CD4-positive, alpha-beta T cell (primary cell): ENCODE measurements at regions of chr11 and their contacts with region 1.

Region 1: GRCh38 chr11:34174412-34175041 is 69.1 kb downstream of the NAT10 start:
- DNase-seq: peak; percentile 65 to 88 (median 74)
- ATAC-seq: peak; percentile 99
- H3K4me3 ChIP-seq: peak overlapping the region; percentile 28
- H3K4me3 Mint-ChIP-seq: no peak overlapping the region
- H3K27ac ChIP-seq: no peak overlapping the region
- H3K27ac Mint-ChIP-seq: no peak overlapping the region
- H3K4me1 ChIP-seq: peaks cover 12% of the 10 kb centered on the region
- H3K4me1 Mint-ChIP-seq: no peaks in the 10 kb centered on the region
- H3K27me3 ChIP-seq: peaks cover 0 to 2% of the 10 kb centered on the region in 2 experiments
- H3K27me3 Mint-ChIP-seq: no peaks in the 10 kb centered on the region
- CTCF ChIP-seq: peak; percentile 79

Region 2: GRCh38 chr11:33857933-33858371 is 316.6 kb before region 1 on chr11:
- CTCF ChIA-PET with region 1: no interaction called
- POLR2A ChIA-PET with region 1: no interaction called
- intact Hi-C with region 1: loop called in 1 of 2 experiments (anchors 5 kb)
- DNase-seq: peak; percentile 54 to 84 (median 64)
- ATAC-seq: peak; percentile 89
- H3K4me3 ChIP-seq: no peak overlapping the region
- H3K4me3 Mint-ChIP-seq: no peak overlapping the region
- H3K27ac ChIP-seq: no peak overlapping the region
- H3K27ac Mint-ChIP-seq: no peak overlapping the region
- H3K4me1 ChIP-seq: no peaks in the 10 kb centered on the region
- H3K4me1 Mint-ChIP-seq: no peaks in the 10 kb centered on the region
- H3K27me3 ChIP-seq: peaks cover 21 to 30% of the 10 kb centered on the region in 2 experiments
- H3K27me3 Mint-ChIP-seq: peaks cover 56% of the 10 kb centered on the region
- CTCF ChIP-seq: peak; percentile 74

Region 3: DNA sequence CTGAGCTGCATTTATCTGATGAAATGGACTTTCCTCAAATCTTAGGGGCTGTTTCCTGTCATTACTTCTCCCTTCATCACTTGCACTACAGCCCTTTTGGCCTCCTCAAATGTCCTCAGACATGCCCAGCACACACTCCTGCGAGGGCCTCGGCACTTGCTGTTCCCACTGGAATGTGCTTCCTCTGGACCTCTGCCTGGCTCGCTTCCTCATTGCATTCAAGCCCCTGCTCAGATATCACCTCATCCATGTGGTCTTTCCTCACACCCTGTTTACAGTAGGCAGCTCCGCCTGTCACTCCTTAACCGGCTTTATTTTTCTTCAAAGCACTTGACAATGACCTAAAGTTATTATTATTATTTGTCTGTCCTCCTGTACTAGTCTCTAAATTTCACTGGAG is 60.1 kb before region 1 on chr11:
- CTCF ChIA-PET with region 1: interaction called, 5 read pairs
- POLR2A ChIA-PET with region 1: no interaction called
- intact Hi-C with region 1: loop called in 1 of 2 experiments (anchors 5 kb)
- DNase-seq: no peak
- ATAC-seq: no peak
- H3K4me3 ChIP-seq: no peak overlapping the region
- H3K4me3 Mint-ChIP-seq: no peak overlapping the region
- H3K27ac ChIP-seq: no peak overlapping the region
- H3K27ac Mint-ChIP-seq: no peak overlapping the region
- H3K4me1 ChIP-seq: no peaks in the 10 kb centered on the region
- H3K4me1 Mint-ChIP-seq: peaks cover 7% of the 10 kb centered on the region
- H3K27me3 ChIP-seq: no peaks in the 10 kb centered on the region
- H3K27me3 Mint-ChIP-seq: no peaks in the 10 kb centered on the region
- CTCF ChIP-seq: no peak

Region 4: GRCh38 chr11:34250732-34251639 is 76.5 kb after region 1 on chr11:
- CTCF ChIA-PET with region 1: interaction called, 17 read pairs
- POLR2A ChIA-PET with region 1: no interaction called
- intact Hi-C with region 1: loop called (anchors 2 to 5 kb)
- DNase-seq: peak; percentile 30 to 87 (median 67)
- ATAC-seq: peak; percentile 94
- H3K4me3 ChIP-seq: peak overlapping the region; percentile 26
- H3K4me3 Mint-ChIP-seq: peak overlapping the region; percentile 14
- H3K27ac ChIP-seq: no peak overlapping the region
- H3K27ac Mint-ChIP-seq: peak overlapping the region; percentile 60
- H3K4me1 ChIP-seq: peaks cover 48% of the 10 kb centered on the region
- H3K4me1 Mint-ChIP-seq: peaks cover 63% of the 10 kb centered on the region
- H3K27me3 ChIP-seq: no peaks in the 10 kb centered on the region
- H3K27me3 Mint-ChIP-seq: no peaks in the 10 kb centered on the region
- CTCF ChIP-seq: no peak

Region 5: DNA sequence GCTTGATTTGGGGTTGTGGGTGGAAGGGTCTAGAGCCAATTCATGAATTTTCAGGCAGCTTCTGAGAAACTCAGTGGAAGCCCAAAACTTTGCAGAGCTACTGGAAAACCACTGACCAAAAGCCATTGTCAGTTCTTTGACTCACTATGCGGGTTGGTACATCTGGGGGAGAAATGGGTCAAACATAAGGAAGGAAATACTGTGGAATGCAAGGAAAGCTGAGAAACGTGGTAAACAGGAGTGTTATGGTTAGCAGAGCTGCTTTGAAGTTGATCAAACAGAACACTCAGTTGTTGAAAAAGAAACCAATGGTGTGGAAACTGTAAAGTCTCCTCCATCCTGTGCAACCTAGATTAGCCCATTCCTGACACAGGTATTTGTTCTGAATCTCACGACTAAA is 189.6 kb after region 1 on chr11:
- CTCF ChIA-PET with region 1: interaction called, 47 read pairs
- POLR2A ChIA-PET with region 1: interaction called, 23 read pairs
- intact Hi-C with region 1: loop called (anchors 1 kb)
- DNase-seq: peak in 1 of 14 experiments; percentile 22
- ATAC-seq: no peak
- H3K4me3 ChIP-seq: no peak overlapping the region
- H3K4me3 Mint-ChIP-seq: no peak overlapping the region
- H3K27ac ChIP-seq: no peak overlapping the region
- H3K27ac Mint-ChIP-seq: no peak overlapping the region
- H3K4me1 ChIP-seq: peaks cover under 1% of the 10 kb centered on the region
- H3K4me1 Mint-ChIP-seq: peaks cover 12% of the 10 kb centered on the region
- H3K27me3 ChIP-seq: peaks cover 0 to 10% of the 10 kb centered on the region in 2 experiments
- H3K27me3 Mint-ChIP-seq: peaks cover 34% of the 10 kb centered on the region
- CTCF ChIP-seq: no peak

Region 6: GRCh38 chr11:34427186-34427805 is 252.8 kb after region 1 on chr11:
- CTCF ChIA-PET with region 1: no interaction called
- POLR2A ChIA-PET with region 1: no interaction called
- intact Hi-C with region 1: no loop called
- DNase-seq: peak in 1 of 14 experiments; percentile 24
- ATAC-seq: no peak
- H3K4me3 ChIP-seq: no peak overlapping the region
- H3K4me3 Mint-ChIP-seq: no peak overlapping the region
- H3K27ac ChIP-seq: no peak overlapping the region
- H3K27ac Mint-ChIP-seq: no peak overlapping the region
- H3K4me1 ChIP-seq: no peaks in the 10 kb centered on the region
- H3K4me1 Mint-ChIP-seq: peaks cover 1% of the 10 kb centered on the region
- H3K27me3 ChIP-seq: peaks cover 0 to 8% of the 10 kb centered on the region in 2 experiments
- H3K27me3 Mint-ChIP-seq: peaks cover 5% of the 10 kb centered on the region
- CTCF ChIP-seq: no peak

Region 7: DNA sequence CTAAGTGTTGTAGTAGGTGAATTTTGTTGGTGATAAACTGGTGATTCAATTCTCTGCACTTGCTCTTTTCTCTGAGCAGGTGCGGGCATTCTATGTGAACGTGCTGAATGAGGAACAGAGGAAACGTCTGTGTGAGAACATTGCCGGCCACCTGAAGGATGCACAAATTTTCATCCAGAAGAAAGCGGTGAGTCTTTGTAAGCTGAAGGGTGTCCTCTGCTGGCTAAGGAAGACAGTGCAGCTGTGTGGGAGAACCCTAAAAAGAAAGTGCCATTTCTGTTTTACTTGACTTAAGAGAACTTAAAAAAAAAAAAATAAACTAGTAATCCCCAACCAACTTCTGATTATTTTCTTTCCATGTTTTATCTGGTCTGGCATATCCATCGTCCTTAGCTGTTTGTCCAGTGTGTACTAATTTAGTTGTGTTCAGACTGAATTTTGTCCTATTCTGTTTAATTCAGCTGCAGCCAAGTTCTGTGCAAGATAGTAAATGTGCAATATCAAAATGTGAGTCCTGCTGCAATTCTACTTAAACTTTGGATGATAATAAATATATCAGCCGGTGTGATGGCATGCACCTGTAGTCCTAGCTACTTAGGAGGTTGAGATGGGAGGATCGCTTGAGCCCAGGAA is 293.8 kb after region 1 on chr11:
- CTCF ChIA-PET with region 1: interaction called, 11 read pairs
- POLR2A ChIA-PET with region 1: no interaction called
- intact Hi-C with region 1: loop called in 1 of 2 experiments (anchors 2 kb)
- DNase-seq: peak in 12 of 14 experiments; percentile 2 to 60 (median 18)
- ATAC-seq: peak; percentile 49
- H3K4me3 ChIP-seq: no peak overlapping the region
- H3K4me3 Mint-ChIP-seq: no peak overlapping the region
- H3K27ac ChIP-seq: no peak overlapping the region
- H3K27ac Mint-ChIP-seq: no peak overlapping the region
- H3K4me1 ChIP-seq: no peaks in the 10 kb centered on the region
- H3K4me1 Mint-ChIP-seq: peaks cover 5% of the 10 kb centered on the region
- H3K27me3 ChIP-seq: no peaks in the 10 kb centered on the region
- H3K27me3 Mint-ChIP-seq: no peaks in the 10 kb centered on the region
- CTCF ChIP-seq: peak; percentile 57